ENCODE measurements at regions of chr19 and their contacts with region 1.

Region 1: GRCh38 chr19:10644260-10645007 is 9.7 kb upstream of the ILF3 start:
- DNase-seq: no peak
- H3K4me3 ChIP-seq: no peak overlapping the region
- CTCF ChIP-seq: peak; percentile 93

Region 2: DNA sequence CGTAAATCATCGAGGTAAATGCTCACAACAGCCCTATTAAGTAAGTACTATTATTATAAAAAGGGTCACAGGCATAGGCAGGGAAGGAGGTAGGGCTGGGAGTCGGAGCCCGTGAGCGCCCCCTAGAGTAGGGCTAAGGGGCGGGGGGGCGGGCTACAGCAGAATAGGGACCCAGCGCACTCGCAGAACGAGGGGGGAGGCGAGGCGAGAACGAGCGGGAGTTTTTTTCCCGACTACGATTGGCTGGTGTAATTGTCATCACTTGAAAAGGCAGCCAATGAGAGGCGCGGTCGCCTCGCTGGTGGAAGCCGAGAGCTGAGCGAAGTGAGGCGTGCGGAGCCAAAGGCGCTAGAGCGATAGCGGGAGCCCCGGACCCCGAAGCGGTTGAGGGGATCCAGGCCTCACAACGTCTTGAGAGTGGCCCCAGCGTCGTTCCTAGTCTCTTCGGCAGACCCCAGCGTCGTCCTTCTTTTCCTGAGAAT is 165.5 kb before region 1 on chr19:
- CTCF ChIA-PET with region 1: interaction called, 12 read pairs
- POLR2A ChIA-PET with region 1: no interaction called
- DNase-seq: no peak
- H3K4me3 ChIP-seq: peak overlapping the region; percentile 47
- CTCF ChIP-seq: peak; percentile 25

Region 3: DNA sequence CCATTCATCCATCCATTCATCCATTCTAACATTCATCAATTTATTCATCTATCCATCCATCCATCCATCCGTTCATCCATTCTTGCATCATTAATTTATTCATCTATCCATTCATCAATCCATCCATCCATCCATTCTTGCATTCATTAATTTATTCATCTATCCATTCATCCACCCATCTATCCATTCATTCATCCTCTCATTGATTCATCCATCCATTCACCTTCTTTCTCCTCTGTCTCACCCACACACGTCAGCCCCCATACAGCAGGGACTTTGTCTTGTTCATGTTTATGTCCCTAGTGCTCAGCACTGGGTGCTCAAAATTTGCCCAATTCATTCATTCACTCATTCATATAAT is 56.7 kb before region 1 on chr19:
- CTCF ChIA-PET with region 1: interaction called, 644 read pairs
- POLR2A ChIA-PET with region 1: no interaction called
- DNase-seq: no peak
- H3K4me3 ChIP-seq: no peak overlapping the region
- CTCF ChIP-seq: no peak

Region 4: GRCh38 chr19:10602330-10603083 is 41.9 kb before region 1 on chr19:
- CTCF ChIA-PET with region 1: interaction called, 21 read pairs
- POLR2A ChIA-PET with region 1: no interaction called
- DNase-seq: no peak
- H3K4me3 ChIP-seq: peak overlapping the region; percentile 96
- CTCF ChIP-seq: no peak

Region 5: DNA sequence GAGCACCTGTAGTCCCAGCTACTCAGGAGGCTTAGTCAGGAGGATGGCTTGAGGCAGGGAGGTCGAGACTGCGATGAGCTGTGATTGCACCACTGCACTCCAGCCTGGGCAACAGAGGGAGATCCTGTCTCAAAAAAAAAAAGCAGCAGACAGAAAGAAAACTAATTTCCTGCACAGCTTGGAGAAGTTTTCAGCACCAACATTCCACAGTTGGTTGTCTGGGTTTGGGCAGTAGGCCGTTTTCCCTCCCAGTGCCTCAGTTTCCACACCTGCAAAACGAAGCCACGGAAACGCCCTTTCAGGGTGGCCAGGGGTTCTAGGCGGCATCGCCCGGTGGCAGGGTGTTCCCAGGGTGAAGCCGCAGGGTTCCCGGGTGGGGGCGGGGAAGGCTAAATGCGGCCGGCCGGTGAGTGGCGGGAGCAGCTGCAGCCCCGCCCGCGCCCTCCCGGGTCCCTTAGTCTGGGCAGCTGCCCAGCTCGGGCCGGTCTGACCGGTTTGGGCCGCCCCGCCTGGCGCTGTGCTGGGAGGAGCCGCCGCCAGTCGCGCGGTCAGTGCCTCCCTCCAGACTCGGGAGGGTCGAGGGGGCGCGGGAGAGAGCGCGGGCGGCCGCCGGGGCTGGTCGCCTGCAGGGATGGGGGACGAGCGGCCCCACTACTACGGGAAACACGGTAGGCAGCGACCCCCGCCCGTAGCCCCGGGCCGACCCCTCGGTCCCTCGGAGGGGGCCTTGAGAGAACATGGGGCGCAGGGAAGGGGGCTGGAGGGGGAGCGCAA is 19.2 kb before region 1 on chr19 and contains the start of gene SLC44A2:
- CTCF ChIA-PET with region 1: interaction called, 10 read pairs
- POLR2A ChIA-PET with region 1: no interaction called
- DNase-seq: no peak
- H3K4me3 ChIP-seq: peak within 1 kb of the TSS; percentile 60
- CTCF ChIP-seq: no peak

Measured in AG04449 (cell line).